ENCODE measurements at regions of chr4 and their contacts with region 1.

Region 1: GRCh38 chr4:26807330-26807729 is 53.3 kb upstream of the STIM2 start:
- DNase-seq: no peak
- H3K4me3 ChIP-seq: no peak overlapping the region
- H3K27ac ChIP-seq: no peak overlapping the region
- H3K4me1 ChIP-seq: no peaks in the 10 kb centered on the region
- H3K27me3 ChIP-seq: no peaks in the 10 kb centered on the region
- CTCF ChIP-seq: no peak
- POLR2A ChIP-seq: no peak

Region 2: DNA sequence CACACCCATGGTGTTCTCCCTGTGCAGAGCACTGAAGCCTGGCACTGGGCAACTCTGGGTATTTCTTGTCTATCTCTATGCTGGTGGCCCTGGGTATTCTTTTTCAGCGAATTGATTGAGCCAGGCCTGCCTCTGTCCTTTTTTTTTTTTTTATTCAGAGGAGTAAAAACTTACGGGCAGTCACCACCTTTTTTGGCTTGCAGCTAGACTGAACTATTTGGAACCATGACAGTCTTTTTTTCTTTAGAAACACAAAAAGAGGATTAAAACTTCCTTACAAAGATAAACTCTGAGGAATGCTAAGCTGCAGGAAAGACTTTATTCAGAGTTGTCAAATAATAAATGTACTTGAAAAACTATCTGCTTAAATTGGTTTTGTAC is 65.8 kb before region 1 on chr4:
- intact Hi-C with region 1: no loop called
- DNase-seq: no peak
- H3K4me3 ChIP-seq: no peak overlapping the region
- H3K27ac ChIP-seq: peak overlapping the region in 1 of 2 donors; percentile 56
- H3K4me1 ChIP-seq: no peaks in the 10 kb centered on the region
- H3K27me3 ChIP-seq: no peaks in the 10 kb centered on the region
- CTCF ChIP-seq: no peak
- POLR2A ChIP-seq: no peak

Region 3: DNA sequence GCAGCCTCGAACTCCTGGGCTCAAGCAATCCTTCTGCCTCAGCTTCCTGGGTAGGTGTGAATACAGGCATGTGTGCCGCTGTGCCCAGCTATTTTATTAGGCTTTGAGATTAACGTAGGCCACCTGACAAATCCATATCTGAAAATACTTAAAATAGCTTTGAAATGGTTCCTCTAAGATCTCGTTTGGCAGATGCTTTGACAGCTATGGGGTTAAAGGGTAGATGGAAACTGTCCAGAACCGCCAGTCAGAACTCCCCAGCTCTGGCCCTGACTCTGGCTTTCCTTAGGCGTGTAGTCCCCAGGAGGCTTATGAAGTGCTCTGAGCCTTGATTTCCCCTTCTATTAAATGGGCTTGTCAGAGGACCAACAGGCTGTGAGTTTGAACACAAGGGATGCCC is 20.5 kb after region 1 on chr4:
- intact Hi-C with region 1: loop called (anchors 1 kb)
- DNase-seq: no peak
- H3K4me3 ChIP-seq: no peak overlapping the region
- H3K27ac ChIP-seq: no peak overlapping the region
- H3K4me1 ChIP-seq: no peaks in the 10 kb centered on the region
- H3K27me3 ChIP-seq: no peaks in the 10 kb centered on the region
- CTCF ChIP-seq: no peak
- POLR2A ChIP-seq: no peak

Measured in breast epithelium (tissue), 4 donors.